B cell (primary cell): ENCODE measurements at regions of chr17 and their contacts with region 1.

Region 1: GRCh38 chr17:74776044-74776977 is at the start of gene NAT9:
- DNase-seq: peak; percentile 98
- ATAC-seq: peak; percentile 79
- H3K4me3 ChIP-seq: peak within 1 kb of the TSS; percentile 66 to 79 (median 77)
- H3K4me3 Mint-ChIP-seq: peak within 1 kb of the TSS; percentile 99
- H3K27ac ChIP-seq: peak within 1 kb of the TSS; percentile 39 to 75
- H3K27ac Mint-ChIP-seq: peak within 1 kb of the TSS; percentile 96
- H3K4me1 ChIP-seq: peaks cover 40 to 46% of the 10 kb centered on the region in 2 donors
- H3K4me1 Mint-ChIP-seq: peaks cover 57% of the 10 kb centered on the region
- H3K27me3 ChIP-seq: no peaks in the 10 kb centered on the region
- H3K27me3 Mint-ChIP-seq: no peaks in the 10 kb centered on the region
- CTCF ChIP-seq: no peak
- total RNA-seq, gene NAT9: 66.6 and 71.1 TPM in 2 replicates

Region 2: GRCh38 chr17:74545843-74546230 is 230.5 kb before region 1 on chr17 and contains the start of gene CD300C:
- CTCF ChIA-PET with region 1: no interaction called
- POLR2A ChIA-PET with region 1: no interaction called
- intact Hi-C with region 1: no loop called
- DNase-seq: no peak
- ATAC-seq: peak; percentile 21
- H3K4me3 ChIP-seq: no peak within 1 kb of the TSS
- H3K4me3 Mint-ChIP-seq: peak within 1 kb of the TSS; percentile 2
- H3K27ac ChIP-seq: no peak within 1 kb of the TSS
- H3K27ac Mint-ChIP-seq: peak within 1 kb of the TSS; percentile 65
- H3K4me1 ChIP-seq: peaks cover 4 to 19% of the 10 kb centered on the region in 2 donors
- H3K4me1 Mint-ChIP-seq: peaks cover 3% of the 10 kb centered on the region
- H3K27me3 ChIP-seq: peaks cover 0 to 4% (median 1%) of the 10 kb centered on the region in 4 experiments
- H3K27me3 Mint-ChIP-seq: peaks cover 15% of the 10 kb centered on the region
- CTCF ChIP-seq: no peak
- total RNA-seq, gene CD300C: 0.19 and 0.74 TPM in 2 replicates

Region 3: GRCh38 chr17:74742153-74742515 is 34.2 kb before region 1 on chr17:
- CTCF ChIA-PET with region 1: interaction called, 76 read pairs
- POLR2A ChIA-PET with region 1: interaction called, 18 read pairs
- intact Hi-C with region 1: loop called (anchors 5 kb)
- DNase-seq: peak; percentile 67
- ATAC-seq: peak; percentile 56
- H3K4me3 ChIP-seq: peak overlapping the region in 2 of 5 experiments; percentile 21 to 34
- H3K4me3 Mint-ChIP-seq: peak overlapping the region; percentile 82
- H3K27ac ChIP-seq: peak overlapping the region; percentile 42 to 62
- H3K27ac Mint-ChIP-seq: peak overlapping the region; percentile 96
- H3K4me1 ChIP-seq: peaks cover 69 to 82% of the 10 kb centered on the region in 2 donors
- H3K4me1 Mint-ChIP-seq: peaks cover 71% of the 10 kb centered on the region
- H3K27me3 ChIP-seq: no peaks in the 10 kb centered on the region
- H3K27me3 Mint-ChIP-seq: no peaks in the 10 kb centered on the region
- CTCF ChIP-seq: no peak

Region 4: DNA sequence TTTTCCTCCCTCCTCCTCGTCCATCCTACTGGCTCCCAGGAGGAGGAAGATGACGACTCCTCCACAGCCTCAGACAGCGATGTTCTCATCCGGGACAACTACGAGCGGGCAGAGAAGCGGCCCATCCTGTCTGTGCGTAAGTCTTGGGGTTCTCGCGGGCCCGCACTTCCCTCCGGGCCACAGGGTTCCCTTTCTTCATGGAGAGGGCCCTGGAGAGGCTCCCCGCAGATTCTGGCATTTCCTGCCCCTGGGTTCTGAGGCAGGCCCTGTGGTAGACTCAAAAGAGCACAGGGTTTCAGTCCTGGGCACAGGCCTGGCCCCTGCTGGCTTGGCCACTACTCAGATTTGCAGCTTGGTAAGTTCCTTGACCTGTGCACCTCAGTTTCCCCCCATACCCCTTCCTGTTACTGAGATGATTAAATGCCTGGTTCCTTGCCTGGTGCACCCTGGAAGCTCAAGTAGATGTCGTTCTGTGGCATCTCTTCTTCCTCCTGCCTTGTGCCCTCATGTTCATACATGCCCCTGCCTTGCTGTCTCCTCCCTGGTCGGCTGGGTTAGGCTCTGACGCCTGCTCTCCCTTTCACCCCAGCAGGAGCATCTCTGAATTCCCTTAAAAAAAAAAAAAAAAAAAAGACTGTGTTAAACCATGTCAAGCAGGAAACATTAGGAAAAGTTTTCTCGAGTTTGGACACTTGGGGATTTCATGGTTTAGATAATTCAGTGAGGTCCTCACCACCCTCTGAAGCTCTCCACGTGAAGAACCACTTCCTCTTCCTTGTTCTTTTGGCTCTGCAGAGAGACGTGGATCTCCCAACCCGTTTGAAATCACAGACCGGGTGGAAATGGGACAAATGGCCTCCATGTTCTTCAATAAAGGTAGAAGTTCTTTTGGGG is 14.1 kb after region 1 on chr17:
- CTCF ChIA-PET with region 1: interaction called, 36 read pairs
- POLR2A ChIA-PET with region 1: interaction called, 6 read pairs
- intact Hi-C with region 1: no loop called
- DNase-seq: no peak
- ATAC-seq: no peak
- H3K4me3 ChIP-seq: no peak overlapping the region
- H3K4me3 Mint-ChIP-seq: no peak overlapping the region
- H3K27ac ChIP-seq: no peak overlapping the region
- H3K27ac Mint-ChIP-seq: no peak overlapping the region
- H3K4me1 ChIP-seq: peaks cover 8 to 24% of the 10 kb centered on the region in 2 donors
- H3K4me1 Mint-ChIP-seq: peaks cover 22% of the 10 kb centered on the region
- H3K27me3 ChIP-seq: no peaks in the 10 kb centered on the region
- H3K27me3 Mint-ChIP-seq: no peaks in the 10 kb centered on the region
- CTCF ChIP-seq: no peak

Region 5: GRCh38 chr17:74815550-74816370 is 39.4 kb after region 1 on chr17:
- CTCF ChIA-PET with region 1: no interaction called
- POLR2A ChIA-PET with region 1: no interaction called
- intact Hi-C with region 1: no loop called
- DNase-seq: no peak
- ATAC-seq: no peak
- H3K4me3 ChIP-seq: no peak overlapping the region
- H3K4me3 Mint-ChIP-seq: no peak overlapping the region
- H3K27ac ChIP-seq: no peak overlapping the region
- H3K27ac Mint-ChIP-seq: no peak overlapping the region
- H3K4me1 ChIP-seq: no peaks in the 10 kb centered on the region
- H3K4me1 Mint-ChIP-seq: peaks cover 1% of the 10 kb centered on the region
- H3K27me3 ChIP-seq: no peaks in the 10 kb centered on the region
- H3K27me3 Mint-ChIP-seq: no peaks in the 10 kb centered on the region
- CTCF ChIP-seq: no peak

Region 6: GRCh38 chr17:74873038-74873873 is 96.9 kb after region 1 on chr17:
- CTCF ChIA-PET with region 1: no interaction called
- POLR2A ChIA-PET with region 1: interaction called, 17 read pairs
- intact Hi-C with region 1: loop called (anchors 1 kb)
- DNase-seq: peak; percentile 100
- ATAC-seq: peak; percentile 93
- H3K4me3 ChIP-seq: peak overlapping the region; percentile 78 to 91 (median 86)
- H3K4me3 Mint-ChIP-seq: peak overlapping the region; percentile 81
- H3K27ac ChIP-seq: peak overlapping the region; percentile 95 to 96
- H3K27ac Mint-ChIP-seq: peak overlapping the region; percentile 94
- H3K4me1 ChIP-seq: peaks cover 12 to 15% of the 10 kb centered on the region in 2 donors
- H3K4me1 Mint-ChIP-seq: peaks cover 12% of the 10 kb centered on the region
- H3K27me3 ChIP-seq: no peaks in the 10 kb centered on the region
- H3K27me3 Mint-ChIP-seq: no peaks in the 10 kb centered on the region
- CTCF ChIP-seq: no peak

Region 7: DNA sequence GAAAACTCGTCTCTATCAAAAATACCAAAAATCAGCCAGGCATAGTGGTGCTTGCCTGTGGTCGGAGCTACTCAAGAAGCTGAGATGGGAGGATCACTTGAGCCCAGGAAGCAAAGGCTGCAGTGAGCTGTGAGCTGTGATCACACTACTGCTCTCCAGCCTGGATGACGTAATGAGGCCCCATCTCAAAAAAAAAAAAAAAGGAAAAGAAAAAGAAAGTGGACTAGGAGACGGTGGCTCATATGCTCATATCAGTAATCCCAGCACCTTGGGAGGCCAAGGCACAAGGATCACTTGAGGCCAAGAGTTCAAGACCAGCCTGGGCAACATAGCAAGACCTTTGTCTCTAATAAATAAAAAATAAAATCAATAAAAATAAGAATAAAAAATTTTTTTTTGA is 415.3 kb after region 1 on chr17:
- CTCF ChIA-PET with region 1: no interaction called
- POLR2A ChIA-PET with region 1: no interaction called
- intact Hi-C with region 1: no loop called
- DNase-seq: no peak
- ATAC-seq: no peak
- H3K4me3 ChIP-seq: no peak overlapping the region
- H3K4me3 Mint-ChIP-seq: no peak overlapping the region
- H3K27ac ChIP-seq: no peak overlapping the region
- H3K27ac Mint-ChIP-seq: no peak overlapping the region
- H3K4me1 ChIP-seq: no peaks in the 10 kb centered on the region
- H3K4me1 Mint-ChIP-seq: no peaks in the 10 kb centered on the region
- H3K27me3 ChIP-seq: no peaks in the 10 kb centered on the region
- H3K27me3 Mint-ChIP-seq: no peaks in the 10 kb centered on the region
- CTCF ChIP-seq: no peak